Tibial artery (tissue), 4 donors: ENCODE measurements at regions of chr12 and their contacts with region 1.

Region 1: GRCh38 chr12:11702959-11703358 is 53.5 kb downstream of the ETV6 start:
- DNase-seq: no peak
- H3K4me3 ChIP-seq: no peak overlapping the region
- H3K27ac ChIP-seq: peak overlapping the region; percentile 25 to 73
- H3K4me1 ChIP-seq: peaks cover 0 to 97% (median 53%) of the 10 kb centered on the region in 4 donors
- H3K27me3 ChIP-seq: no peaks in the 10 kb centered on the region
- CTCF ChIP-seq: no peak

Region 2: DNA sequence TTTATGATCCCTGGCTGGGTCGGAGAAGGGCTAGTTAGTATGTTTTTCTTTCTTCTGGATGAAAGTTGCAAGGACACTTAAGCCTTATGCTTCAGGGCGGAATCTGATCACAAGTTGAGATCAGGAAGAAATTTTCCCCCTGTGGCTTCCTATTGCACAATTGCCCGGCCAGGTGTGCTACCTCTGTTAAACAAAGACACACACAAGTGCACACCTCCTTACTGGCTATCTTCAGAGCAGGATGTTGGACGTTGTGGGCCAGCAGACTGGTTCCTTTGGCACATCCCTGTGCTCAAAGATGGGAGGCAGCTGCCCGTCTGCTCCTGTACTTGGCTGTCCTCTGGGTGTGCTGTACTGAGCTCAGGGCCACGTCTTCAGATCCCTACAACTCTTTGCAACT is 34.4 kb before region 1 on chr12:
- intact Hi-C with region 1: loop called (anchors 5 kb)
- DNase-seq: no peak
- H3K4me3 ChIP-seq: no peak overlapping the region
- H3K27ac ChIP-seq: peak overlapping the region in 1 of 2 donors; percentile 12
- H3K4me1 ChIP-seq: peaks cover 6 to 93% (median 43%) of the 10 kb centered on the region in 4 donors
- H3K27me3 ChIP-seq: no peaks in the 10 kb centered on the region
- CTCF ChIP-seq: no peak